Body of pancreas (tissue), 4 donors: ENCODE measurements at regions of chr5 and their contacts with region 1.

Region 1: DNA sequence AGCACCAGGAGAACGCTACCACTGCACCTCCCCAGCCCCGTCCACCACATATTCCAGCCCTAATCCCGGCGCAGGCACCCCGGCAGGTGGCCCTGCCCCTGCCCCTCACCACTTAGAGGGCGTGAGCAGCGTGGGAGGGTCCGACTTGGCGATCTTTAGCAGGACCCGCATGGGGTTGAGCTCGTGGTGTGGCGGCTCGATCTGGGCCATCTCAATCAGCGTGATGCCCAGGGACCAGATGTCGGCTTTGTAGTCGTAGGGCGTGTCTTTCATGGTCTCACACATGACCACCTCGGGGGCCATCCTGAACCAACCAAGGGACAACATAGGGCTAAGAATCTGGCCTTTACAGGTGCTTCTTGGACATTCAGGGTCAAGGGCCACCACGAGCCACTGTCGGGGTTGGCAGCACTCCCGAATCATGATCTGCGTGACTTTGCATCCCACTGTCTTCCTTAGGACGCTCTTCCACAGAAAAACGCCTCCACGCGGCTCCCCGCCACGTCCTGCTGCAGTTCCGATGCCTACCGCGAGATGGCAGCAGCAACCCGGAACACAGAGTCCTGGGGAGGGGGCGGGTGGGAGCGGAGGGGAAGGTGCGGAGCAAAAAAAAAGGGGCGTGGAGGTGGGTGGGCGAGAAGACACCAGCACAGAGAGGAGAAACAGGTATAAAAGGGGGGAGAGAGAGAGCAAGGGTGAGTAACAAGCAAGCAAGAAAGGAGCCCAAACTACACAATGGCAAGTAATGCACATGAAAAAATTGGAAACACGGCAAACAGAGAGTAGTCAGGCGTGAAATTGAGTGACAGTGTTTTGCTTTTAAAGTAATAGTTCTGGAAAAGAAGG is 81.3 kb downstream of the STK10 start:
- DNase-seq: peak; percentile 30 to 71 (median 63)
- ATAC-seq: peak; percentile 52
- H3K4me3 ChIP-seq: no peak overlapping the region
- H3K27ac ChIP-seq: peak overlapping the region in 1 of 4 donors; percentile 38
- H3K4me1 ChIP-seq: peaks cover 36% of the 10 kb centered on the region
- H3K27me3 ChIP-seq: no peaks in the 10 kb centered on the region
- CTCF ChIP-seq: peak; percentile 77 to 99 (median 90)
- POLR2A ChIP-seq: no peak

Region 2: DNA sequence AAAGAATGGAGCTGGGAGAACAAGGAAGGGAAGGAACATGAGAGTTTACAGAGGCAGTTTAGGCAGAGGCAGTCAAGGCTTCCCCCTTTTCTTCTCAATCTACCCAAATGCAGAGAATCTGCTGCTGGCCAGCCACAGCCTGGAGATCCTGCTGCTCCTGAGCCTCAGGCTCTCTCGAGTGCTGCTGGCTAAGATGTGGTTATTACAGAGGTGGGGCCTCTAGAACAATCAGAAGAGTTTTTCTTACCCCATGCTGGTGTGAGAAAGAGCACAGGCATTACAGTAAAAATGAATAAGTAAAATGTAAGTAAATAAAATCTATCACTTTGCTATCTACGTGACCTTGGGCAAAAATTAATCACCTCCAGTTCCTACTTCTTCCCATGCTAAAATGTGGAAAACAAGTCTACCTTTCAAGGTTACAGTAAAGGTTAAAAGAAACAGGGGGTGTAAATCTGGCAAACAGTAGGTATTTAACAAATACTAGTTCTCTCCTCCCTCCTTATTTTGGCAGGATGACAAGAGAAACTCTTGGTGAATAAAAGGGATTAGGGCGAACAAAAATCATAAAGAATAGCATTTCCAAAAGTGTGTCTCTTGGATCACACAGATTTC is 131.4 kb before region 1 on chr5:
- intact Hi-C with region 1: no loop called
- DNase-seq: peak in 2 of 4 donors; percentile 13 to 25
- ATAC-seq: peak; percentile 47
- H3K4me3 ChIP-seq: no peak overlapping the region
- H3K27ac ChIP-seq: peak overlapping the region; percentile 37 to 76 (median 70)
- H3K4me1 ChIP-seq: peaks cover 76% of the 10 kb centered on the region
- H3K27me3 ChIP-seq: no peaks in the 10 kb centered on the region
- CTCF ChIP-seq: no peak
- POLR2A ChIP-seq: no peak

Region 3: DNA sequence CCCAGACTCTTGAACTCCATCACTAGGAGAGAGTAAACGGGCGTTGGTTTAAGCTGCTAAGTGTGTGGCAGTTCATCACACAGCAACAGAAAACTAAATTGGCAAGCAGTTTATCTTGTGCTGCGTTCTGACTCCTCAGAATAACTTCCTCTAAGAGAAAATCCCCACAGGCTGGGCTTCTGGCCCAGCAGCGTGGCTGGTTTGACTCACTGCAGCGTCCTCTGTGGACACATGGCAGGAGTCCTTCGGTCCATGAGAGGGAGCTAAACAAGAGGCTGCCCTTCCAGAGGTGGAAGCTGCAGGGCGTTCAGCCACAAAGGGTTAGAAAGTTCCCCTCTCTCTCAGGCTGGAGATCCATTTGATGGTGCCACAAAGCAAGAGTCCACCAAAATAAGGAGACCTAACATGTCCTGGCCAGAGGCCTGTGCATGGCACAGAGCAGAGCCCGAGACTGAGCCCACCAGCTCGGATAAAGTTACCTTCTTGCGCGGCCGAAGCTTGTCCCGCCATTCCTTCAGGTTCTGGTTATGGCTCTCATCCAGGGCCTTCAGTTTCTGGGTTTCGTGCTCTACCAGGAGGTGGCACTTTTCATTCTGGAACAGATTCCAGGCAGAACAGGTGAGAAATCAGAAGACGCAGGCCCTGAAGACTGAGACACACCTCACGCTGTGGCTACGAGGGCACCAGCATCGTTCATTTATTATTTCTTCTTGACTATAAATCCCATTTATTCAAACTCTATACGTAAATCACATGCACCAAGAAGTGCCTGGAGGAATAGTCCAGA is 54.1 kb before region 1 on chr5:
- intact Hi-C with region 1: no loop called
- DNase-seq: peak in 2 of 4 donors; percentile 35 to 51
- ATAC-seq: no peak
- H3K4me3 ChIP-seq: no peak overlapping the region
- H3K27ac ChIP-seq: no peak overlapping the region
- H3K4me1 ChIP-seq: peaks cover 2% of the 10 kb centered on the region
- H3K27me3 ChIP-seq: no peaks in the 10 kb centered on the region
- CTCF ChIP-seq: no peak
- POLR2A ChIP-seq: no peak

Region 4: DNA sequence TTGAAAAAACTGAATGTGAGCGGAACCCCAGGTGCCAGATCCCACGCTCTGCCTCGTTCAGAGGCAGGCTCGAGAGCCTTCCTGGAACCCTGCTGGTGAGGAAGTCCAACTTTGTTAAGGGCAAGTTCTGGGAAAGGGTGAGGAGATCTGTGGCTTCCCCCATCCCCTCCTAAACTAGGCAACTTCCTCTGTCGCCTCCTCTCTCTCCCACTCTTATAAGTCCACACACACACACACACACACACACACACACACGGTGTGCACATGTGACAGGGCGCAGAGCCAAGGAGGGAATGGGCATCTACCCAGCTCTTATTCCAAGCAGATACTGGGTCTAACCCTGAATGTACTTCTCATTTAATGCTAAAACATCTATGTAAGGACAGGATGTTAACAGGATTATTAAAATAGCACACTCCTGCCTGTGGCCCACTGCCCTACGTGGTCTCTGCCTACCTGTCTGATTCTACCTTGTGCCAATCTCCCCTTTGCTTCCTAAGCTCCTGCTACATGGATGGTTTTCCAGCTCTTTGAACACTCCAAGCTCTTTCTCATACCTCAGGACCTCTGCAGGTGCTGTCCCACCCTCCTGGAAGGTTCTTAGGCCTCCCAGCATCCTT is 27.9 kb before region 1 on chr5:
- intact Hi-C with region 1: no loop called
- DNase-seq: peak; percentile 80 to 87 (median 82)
- ATAC-seq: peak; percentile 70
- H3K4me3 ChIP-seq: no peak overlapping the region
- H3K27ac ChIP-seq: peak overlapping the region in 2 of 4 donors; percentile 30 to 39
- H3K4me1 ChIP-seq: peaks cover 14% of the 10 kb centered on the region
- H3K27me3 ChIP-seq: no peaks in the 10 kb centered on the region
- CTCF ChIP-seq: peak in 2 of 7 experiments; percentile 12 to 16
- POLR2A ChIP-seq: no peak

Region 5: GRCh38 chr5:172187096-172188032 is 80.6 kb after region 1 on chr5:
- intact Hi-C with region 1: loop called (anchors 2 kb)
- DNase-seq: peak; percentile 31 to 67 (median 52)
- ATAC-seq: peak; percentile 0
- H3K4me3 ChIP-seq: peak overlapping the region; percentile 79 to 83
- H3K27ac ChIP-seq: peak overlapping the region; percentile 37 to 90 (median 74)
- H3K4me1 ChIP-seq: peaks cover 15% of the 10 kb centered on the region
- H3K27me3 ChIP-seq: no peaks in the 10 kb centered on the region
- CTCF ChIP-seq: no peak
- POLR2A ChIP-seq: peak in 1 of 3 donors; percentile 35

Region 6: DNA sequence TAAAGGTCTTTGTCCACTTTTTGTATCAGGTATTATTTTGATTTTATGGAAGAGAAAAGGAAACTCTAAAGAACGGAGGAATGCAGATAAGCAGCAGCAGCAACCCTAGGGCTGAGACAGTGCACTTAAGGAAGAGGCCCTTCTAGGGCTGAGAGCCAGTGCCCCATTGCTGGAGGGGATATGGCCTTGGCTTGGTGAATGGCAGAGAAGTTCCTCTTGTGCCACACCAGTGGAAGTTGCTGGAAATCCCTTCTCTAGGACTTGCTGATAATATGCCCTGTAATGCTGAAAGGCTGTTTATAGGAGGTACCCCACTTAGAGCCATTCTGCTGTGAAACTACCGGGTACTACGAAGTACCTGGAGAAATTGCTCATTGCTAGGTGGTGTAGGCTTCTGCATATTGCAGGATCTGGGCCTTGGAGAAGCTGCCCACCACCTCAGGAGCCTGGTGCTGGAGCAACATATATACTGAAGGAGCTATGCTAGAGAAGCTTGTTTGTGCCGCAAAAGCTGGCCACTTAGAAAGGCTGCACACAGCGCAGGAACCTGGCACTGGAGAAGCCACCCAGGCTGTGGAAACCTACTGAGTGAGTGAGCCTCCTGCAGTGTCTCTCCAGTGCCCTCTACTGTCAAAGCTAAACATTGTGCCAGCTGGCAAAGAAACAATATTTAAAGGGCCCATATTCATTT is 186.5 kb after region 1 on chr5:
- intact Hi-C with region 1: loop called (anchors 5 kb)
- DNase-seq: peak; percentile 70 to 86 (median 83)
- ATAC-seq: peak; percentile 96
- H3K4me3 ChIP-seq: no peak overlapping the region
- H3K27ac ChIP-seq: peak overlapping the region in 2 of 4 donors; percentile 25 to 34
- H3K4me1 ChIP-seq: peaks cover 10% of the 10 kb centered on the region
- H3K27me3 ChIP-seq: no peaks in the 10 kb centered on the region
- CTCF ChIP-seq: peak; percentile 66 to 94 (median 86)
- POLR2A ChIP-seq: no peak

Region 7: DNA sequence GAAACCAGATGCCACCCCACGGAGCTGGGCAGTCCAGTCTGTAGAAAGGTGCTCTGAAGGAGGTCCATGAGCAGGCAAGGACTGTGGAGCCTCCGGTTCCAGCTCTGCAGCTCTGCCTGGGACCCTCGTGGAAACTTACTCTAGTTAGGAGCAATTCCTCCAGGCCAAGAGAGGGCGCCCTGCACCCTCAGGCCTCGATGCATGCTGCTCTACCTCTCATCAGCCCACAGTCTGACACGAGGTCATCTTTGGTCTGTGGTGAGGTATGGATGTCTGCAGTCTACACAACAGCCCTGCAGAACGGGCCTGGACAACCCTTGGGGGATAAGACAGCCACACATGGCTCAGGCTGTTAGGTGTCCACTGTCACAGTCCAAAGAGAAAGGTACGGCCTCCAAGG is 227.5 kb after region 1 on chr5:
- intact Hi-C with region 1: no loop called
- DNase-seq: no peak
- ATAC-seq: no peak
- H3K4me3 ChIP-seq: no peak overlapping the region
- H3K27ac ChIP-seq: no peak overlapping the region
- H3K4me1 ChIP-seq: no peaks in the 10 kb centered on the region
- H3K27me3 ChIP-seq: no peaks in the 10 kb centered on the region
- CTCF ChIP-seq: no peak
- POLR2A ChIP-seq: no peak